ENCODE measurements at regions of chr4 and their contacts with region 1.

Region 1: GRCh38 chr4:38902695-38903094 is 35.1 kb downstream of the FAM114A1 start:
- DNase-seq: peak; percentile 67
- ATAC-seq: peak; percentile 73
- H3K4me3 ChIP-seq: no peak overlapping the region
- H3K4me3 Mint-ChIP-seq: no peak overlapping the region
- H3K27ac ChIP-seq: no peak overlapping the region
- H3K27ac Mint-ChIP-seq: no peak overlapping the region
- H3K4me1 ChIP-seq: no peaks in the 10 kb centered on the region
- H3K4me1 Mint-ChIP-seq: peaks cover 6% of the 10 kb centered on the region
- H3K27me3 ChIP-seq: no peaks in the 10 kb centered on the region
- H3K27me3 Mint-ChIP-seq: no peaks in the 10 kb centered on the region
- CTCF ChIP-seq: peak; percentile 73

Region 2: DNA sequence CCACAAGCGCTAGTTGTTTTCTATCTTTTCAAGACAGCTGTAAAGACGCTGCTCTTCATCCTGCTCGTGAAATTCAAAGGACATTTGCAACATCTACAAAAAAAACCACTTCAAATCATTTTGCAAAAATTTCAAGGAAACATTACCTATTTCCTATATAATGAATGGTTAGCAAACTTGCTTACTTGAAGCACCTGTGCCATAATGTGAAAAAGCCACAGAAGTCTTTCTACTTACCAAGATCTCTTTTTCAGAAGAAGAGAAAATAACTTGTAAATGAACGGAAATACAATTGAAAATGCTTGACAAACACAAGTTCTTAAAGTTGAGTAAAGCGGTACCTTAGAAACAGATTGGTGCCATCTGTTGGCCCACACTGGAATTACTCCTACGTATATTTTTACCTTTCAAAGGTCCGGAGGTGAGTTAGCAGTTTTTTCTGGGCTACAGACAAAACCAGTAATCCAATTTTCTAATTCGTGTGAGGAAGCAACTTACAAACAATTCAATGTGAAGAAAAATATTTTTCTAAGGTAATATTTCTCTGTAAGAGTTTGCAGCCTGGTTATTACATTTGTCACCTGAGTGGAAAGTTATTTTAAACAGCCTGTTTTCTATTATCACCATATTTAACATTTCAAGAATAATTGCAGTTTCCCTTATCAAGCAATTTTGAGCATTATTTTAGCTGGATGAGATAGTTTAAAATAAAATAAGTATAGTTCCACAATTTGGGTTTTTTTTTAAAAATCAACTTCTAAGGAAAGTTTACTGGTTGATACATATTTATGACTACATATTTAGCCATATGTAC is 46.0 kb before region 1 on chr4 and contains the start of gene TLR6:
- CTCF ChIA-PET with region 1: interaction called, 13 read pairs
- POLR2A ChIA-PET with region 1: no interaction called
- intact Hi-C with region 1: no loop called
- DNase-seq: peak; percentile 87
- ATAC-seq: peak; percentile 56
- H3K4me3 ChIP-seq: peak within 1 kb of the TSS; percentile 51 to 78 (median 70)
- H3K4me3 Mint-ChIP-seq: peak within 1 kb of the TSS; percentile 93
- H3K27ac ChIP-seq: peak within 1 kb of the TSS; percentile 73 to 77
- H3K27ac Mint-ChIP-seq: peak within 1 kb of the TSS; percentile 94
- H3K4me1 ChIP-seq: peaks cover 39 to 43% of the 10 kb centered on the region in 2 donors
- H3K4me1 Mint-ChIP-seq: peaks cover 52% of the 10 kb centered on the region
- H3K27me3 ChIP-seq: no peaks in the 10 kb centered on the region
- H3K27me3 Mint-ChIP-seq: no peaks in the 10 kb centered on the region
- CTCF ChIP-seq: peak; percentile 87
- total RNA-seq, gene TLR6: 54.4 and 60.6 TPM in 2 replicates

Region 3: DNA sequence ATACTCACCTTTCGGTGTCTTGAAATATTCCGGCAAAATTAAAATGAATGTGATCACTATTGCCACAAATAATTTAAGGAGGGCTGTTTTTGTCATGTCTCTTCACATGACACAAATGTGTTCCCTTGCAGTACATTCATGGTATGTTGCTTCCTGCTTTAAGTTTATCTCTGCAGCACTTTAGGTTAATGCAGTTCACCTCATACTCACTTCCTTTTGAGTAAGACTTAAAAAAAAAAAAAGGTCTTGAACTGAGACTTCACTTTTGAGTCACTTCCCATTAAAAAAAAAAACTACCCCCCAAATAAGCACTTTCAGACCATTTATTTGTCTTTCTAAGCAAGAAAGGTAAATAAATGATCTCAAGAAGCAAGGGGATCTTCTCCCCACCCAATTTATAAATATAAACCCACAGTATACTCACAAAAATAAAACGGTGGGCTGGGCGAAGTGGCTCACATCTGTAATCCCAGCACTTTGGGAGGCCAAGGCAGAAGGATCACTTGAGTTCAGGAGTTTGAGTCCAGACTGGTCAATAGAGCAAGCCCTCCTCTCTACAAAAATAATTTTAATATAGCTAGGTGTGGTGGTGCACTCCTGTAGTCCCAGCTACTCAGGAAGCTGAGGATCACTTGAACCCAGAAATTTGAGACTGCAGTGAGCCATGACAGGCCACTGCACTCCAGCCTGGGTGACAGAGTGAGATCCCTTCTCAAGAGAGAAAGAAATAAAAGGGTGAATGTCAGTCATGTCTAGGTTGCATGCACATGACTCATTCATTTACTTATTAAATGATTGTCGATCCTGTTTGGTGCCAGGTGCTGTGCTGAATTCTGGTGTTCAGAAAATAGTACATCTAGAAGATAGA is 129.8 kb after region 1 on chr4 and contains the start of gene TMEM156:
- CTCF ChIA-PET with region 1: interaction called, 14 read pairs
- POLR2A ChIA-PET with region 1: interaction called, 3 read pairs
- intact Hi-C with region 1: no loop called
- DNase-seq: peak; percentile 78
- ATAC-seq: peak; percentile 68
- H3K4me3 ChIP-seq: peak within 1 kb of the TSS; percentile 63 to 98 (median 69)
- H3K4me3 Mint-ChIP-seq: peak within 1 kb of the TSS; percentile 85
- H3K27ac ChIP-seq: peak within 1 kb of the TSS; percentile 72 to 84
- H3K27ac Mint-ChIP-seq: peak within 1 kb of the TSS; percentile 87
- H3K4me1 ChIP-seq: peaks cover 27 to 36% of the 10 kb centered on the region in 2 donors
- H3K4me1 Mint-ChIP-seq: peaks cover 54% of the 10 kb centered on the region
- H3K27me3 ChIP-seq: no peaks in the 10 kb centered on the region
- H3K27me3 Mint-ChIP-seq: no peaks in the 10 kb centered on the region
- CTCF ChIP-seq: no peak
- total RNA-seq, gene TMEM156: 59.9 and 61.4 TPM in 2 replicates

Region 4: DNA sequence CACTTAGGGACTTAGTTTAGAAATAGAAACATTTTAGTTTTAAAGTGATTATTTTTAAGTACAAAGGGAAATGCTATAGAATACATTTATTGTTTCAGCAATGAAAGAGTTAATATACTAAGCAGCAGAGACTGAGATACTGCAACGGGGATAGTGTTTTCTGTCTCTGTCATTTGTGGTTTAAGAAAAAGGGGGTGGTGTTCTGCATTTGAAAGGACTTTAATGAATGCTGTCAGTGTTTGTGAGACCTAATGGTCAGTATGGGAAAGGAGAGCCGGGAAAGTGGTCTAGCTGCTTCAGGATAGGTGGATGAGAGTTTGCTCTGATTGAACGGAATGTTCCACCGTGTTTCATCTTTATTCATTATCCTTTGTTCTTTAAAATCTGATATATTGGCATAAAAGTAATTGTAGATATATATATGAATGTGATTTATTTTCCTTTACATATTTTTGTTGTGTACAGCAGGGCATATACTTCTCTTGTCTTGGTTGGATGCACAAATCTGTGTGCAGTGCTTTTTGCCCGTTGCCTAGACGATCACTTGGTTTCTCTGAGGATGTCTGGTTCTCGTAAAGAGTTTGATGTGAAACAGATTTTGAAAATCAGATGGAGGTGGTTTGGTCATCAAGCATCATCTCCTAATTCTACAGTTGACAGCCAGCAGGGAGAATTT is 159.5 kb after region 1 on chr4 and contains the start of gene KLHL5:
- CTCF ChIA-PET with region 1: interaction called, 16 read pairs
- POLR2A ChIA-PET with region 1: no interaction called
- intact Hi-C with region 1: no loop called
- DNase-seq: no peak
- ATAC-seq: no peak
- H3K4me3 ChIP-seq: no peak within 1 kb of the TSS
- H3K4me3 Mint-ChIP-seq: peak within 1 kb of the TSS; percentile 17
- H3K27ac ChIP-seq: no peak within 1 kb of the TSS
- H3K27ac Mint-ChIP-seq: peak within 1 kb of the TSS; percentile 50
- H3K4me1 ChIP-seq: peaks cover 10 to 23% of the 10 kb centered on the region in 2 donors
- H3K4me1 Mint-ChIP-seq: peaks cover 36% of the 10 kb centered on the region
- H3K27me3 ChIP-seq: no peaks in the 10 kb centered on the region
- H3K27me3 Mint-ChIP-seq: no peaks in the 10 kb centered on the region
- CTCF ChIP-seq: no peak
- total RNA-seq, gene KLHL5: 90.0 and 95.5 TPM in 2 replicates

Region 5: GRCh38 chr4:39103291-39103690 is 200.6 kb after region 1 on chr4:
- CTCF ChIA-PET with region 1: interaction called, 16 read pairs
- POLR2A ChIA-PET with region 1: no interaction called
- intact Hi-C with region 1: no loop called
- DNase-seq: no peak
- ATAC-seq: no peak
- H3K4me3 ChIP-seq: no peak overlapping the region
- H3K4me3 Mint-ChIP-seq: no peak overlapping the region
- H3K27ac ChIP-seq: no peak overlapping the region
- H3K27ac Mint-ChIP-seq: no peak overlapping the region
- H3K4me1 ChIP-seq: no peaks in the 10 kb centered on the region
- H3K4me1 Mint-ChIP-seq: no peaks in the 10 kb centered on the region
- H3K27me3 ChIP-seq: no peaks in the 10 kb centered on the region
- H3K27me3 Mint-ChIP-seq: no peaks in the 10 kb centered on the region
- CTCF ChIP-seq: no peak

Region 6: GRCh38 chr4:39181905-39182638 is 279.4 kb after region 1 on chr4 and contains the start of gene WDR19:
- CTCF ChIA-PET with region 1: interaction called, 21 read pairs
- POLR2A ChIA-PET with region 1: no interaction called
- intact Hi-C with region 1: loop called (anchors 5 kb)
- DNase-seq: peak; percentile 99
- ATAC-seq: peak; percentile 96
- H3K4me3 ChIP-seq: peak within 1 kb of the TSS; percentile 76 to 99 (median 94)
- H3K4me3 Mint-ChIP-seq: peak within 1 kb of the TSS; percentile 47
- H3K27ac ChIP-seq: peak within 1 kb of the TSS; percentile 12 to 79
- H3K27ac Mint-ChIP-seq: no peak within 1 kb of the TSS
- H3K4me1 ChIP-seq: peaks cover 12 to 16% of the 10 kb centered on the region in 2 donors
- H3K4me1 Mint-ChIP-seq: peaks cover 8% of the 10 kb centered on the region
- H3K27me3 ChIP-seq: no peaks in the 10 kb centered on the region
- H3K27me3 Mint-ChIP-seq: no peaks in the 10 kb centered on the region
- CTCF ChIP-seq: peak; percentile 73
- total RNA-seq, gene WDR19: 79.8 and 83.2 TPM in 2 replicates

Region 7: GRCh38 chr4:39855909-39856512 is 953.3 kb after region 1 on chr4:
- CTCF ChIA-PET with region 1: no interaction called
- POLR2A ChIA-PET with region 1: no interaction called
- intact Hi-C with region 1: no loop called
- DNase-seq: no peak
- ATAC-seq: no peak
- H3K4me3 ChIP-seq: no peak overlapping the region
- H3K4me3 Mint-ChIP-seq: no peak overlapping the region
- H3K27ac ChIP-seq: no peak overlapping the region
- H3K27ac Mint-ChIP-seq: no peak overlapping the region
- H3K4me1 ChIP-seq: no peaks in the 10 kb centered on the region
- H3K4me1 Mint-ChIP-seq: no peaks in the 10 kb centered on the region
- H3K27me3 ChIP-seq: no peaks in the 10 kb centered on the region
- H3K27me3 Mint-ChIP-seq: no peaks in the 10 kb centered on the region
- CTCF ChIP-seq: no peak

Measured in B cell (primary cell).